ENCODE measurements at regions of chr10 and their contacts with region 1.

Region 1: GRCh38 chr10:71187600-71187999 is 24.8 kb upstream of the UNC5B start:
- DNase-seq: peak; percentile 55
- ATAC-seq: peak; percentile 83 to 84

Region 2: GRCh38 chr10:71015674-71016073 is 171.9 kb before region 1 on chr10:
- intact Hi-C with region 1: loop called in 1 of 2 experiments (anchors 10 kb)
- DNase-seq: no peak
- ATAC-seq: no peak

Region 3: DNA sequence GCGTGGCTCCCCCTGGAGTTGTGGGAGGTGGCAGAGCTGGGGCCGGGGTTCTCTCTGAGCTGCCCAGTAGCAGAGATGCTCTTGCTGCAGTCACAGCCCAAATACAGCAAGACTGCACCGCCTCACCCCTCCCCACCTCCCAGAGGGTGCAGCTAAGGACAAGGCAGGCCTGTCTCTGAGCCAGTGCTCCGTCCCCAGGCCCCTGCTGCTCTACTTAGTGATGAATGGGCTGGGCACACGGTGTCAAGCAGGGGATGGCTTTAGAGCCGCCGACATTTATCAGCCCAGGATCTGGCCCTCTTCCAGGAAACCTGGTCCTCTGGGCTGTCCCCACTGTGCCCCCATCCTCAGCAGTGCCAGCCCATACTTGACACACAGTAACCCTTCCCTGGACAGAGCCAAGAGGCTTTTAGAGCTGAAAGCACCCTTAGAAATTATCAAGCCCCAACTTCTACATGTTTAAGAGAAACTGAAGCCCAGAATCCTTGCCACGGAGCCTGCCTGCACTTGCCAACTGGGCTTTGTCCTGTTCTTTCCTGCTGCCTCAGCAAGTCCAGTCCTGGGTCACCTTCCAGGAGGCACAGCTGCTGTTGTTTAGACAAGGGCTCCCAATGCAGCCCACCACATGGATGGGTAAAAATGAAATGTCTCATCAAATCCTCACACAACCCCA is 112.4 kb before region 1 on chr10:
- intact Hi-C with region 1: loop called in 1 of 2 experiments (anchors 10 kb)
- DNase-seq: no peak
- ATAC-seq: peak; percentile 79 to 84

Region 4: GRCh38 chr10:71671994-71672946 is 484.7 kb after region 1 on chr10:
- intact Hi-C with region 1: no loop called
- DNase-seq: no peak
- ATAC-seq: no peak